RWPE1 (cell line): ENCODE measurements at regions of chr2 and their contacts with region 1.

Region 1: DNA sequence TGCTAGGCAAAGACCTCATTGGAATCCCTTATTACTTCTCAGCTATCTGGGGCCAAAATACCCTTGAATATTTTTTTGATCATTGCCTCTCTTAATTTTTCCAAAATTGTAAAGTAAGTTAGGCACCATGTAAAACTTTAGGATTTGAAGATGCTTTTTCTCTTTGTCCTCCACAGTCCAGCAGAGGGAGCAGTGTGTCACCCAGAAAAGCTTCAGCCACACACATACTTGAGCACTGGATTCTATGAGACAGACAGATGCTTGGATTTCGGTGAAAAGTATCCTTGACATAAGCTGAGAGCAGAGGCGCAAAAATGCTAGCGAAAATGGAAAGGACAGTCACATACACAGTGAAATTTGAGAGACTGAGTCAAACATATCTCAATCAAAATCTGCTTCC is 74.7 kb upstream of the KCNJ3 start:
- DNase-seq: peak; percentile 13
- H3K27ac ChIP-seq: no peak overlapping the region
- CTCF ChIP-seq: peak; percentile 61

Region 2: DNA sequence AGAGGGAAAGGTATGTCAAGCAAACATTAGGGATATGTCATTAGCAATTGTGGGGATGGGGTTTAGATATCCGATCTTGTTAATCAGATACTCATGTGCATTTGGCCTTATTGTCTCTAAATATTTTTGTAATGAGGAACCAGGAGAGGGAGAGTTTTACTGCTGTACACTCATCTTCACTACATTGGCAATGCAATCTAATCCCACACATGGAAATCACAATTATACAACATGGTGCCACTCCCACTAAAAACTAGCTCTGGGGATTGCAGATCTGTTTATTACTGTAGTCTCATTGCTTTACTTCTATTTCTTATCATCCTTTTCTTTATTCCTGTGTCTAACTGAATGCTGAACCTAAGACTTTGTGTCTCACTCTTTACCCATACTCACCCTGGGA is 35.0 kb after region 1 on chr2:
- CTCF ChIA-PET with region 1: interaction called, 10 read pairs
- POLR2A ChIA-PET with region 1: no interaction called
- DNase-seq: no peak
- H3K27ac ChIP-seq: no peak overlapping the region
- CTCF ChIP-seq: no peak